Cardiac septum (tissue), 1 donor: ENCODE measurements at regions of chr22 and their contacts with region 1.

Region 1: GRCh38 chr22:39532215-39533071 is at the start of gene RPS19BP1:
- DNase-seq: peak; percentile 99
- total RNA-seq, gene RPS19BP1: 43.7 TPM

Region 2: DNA sequence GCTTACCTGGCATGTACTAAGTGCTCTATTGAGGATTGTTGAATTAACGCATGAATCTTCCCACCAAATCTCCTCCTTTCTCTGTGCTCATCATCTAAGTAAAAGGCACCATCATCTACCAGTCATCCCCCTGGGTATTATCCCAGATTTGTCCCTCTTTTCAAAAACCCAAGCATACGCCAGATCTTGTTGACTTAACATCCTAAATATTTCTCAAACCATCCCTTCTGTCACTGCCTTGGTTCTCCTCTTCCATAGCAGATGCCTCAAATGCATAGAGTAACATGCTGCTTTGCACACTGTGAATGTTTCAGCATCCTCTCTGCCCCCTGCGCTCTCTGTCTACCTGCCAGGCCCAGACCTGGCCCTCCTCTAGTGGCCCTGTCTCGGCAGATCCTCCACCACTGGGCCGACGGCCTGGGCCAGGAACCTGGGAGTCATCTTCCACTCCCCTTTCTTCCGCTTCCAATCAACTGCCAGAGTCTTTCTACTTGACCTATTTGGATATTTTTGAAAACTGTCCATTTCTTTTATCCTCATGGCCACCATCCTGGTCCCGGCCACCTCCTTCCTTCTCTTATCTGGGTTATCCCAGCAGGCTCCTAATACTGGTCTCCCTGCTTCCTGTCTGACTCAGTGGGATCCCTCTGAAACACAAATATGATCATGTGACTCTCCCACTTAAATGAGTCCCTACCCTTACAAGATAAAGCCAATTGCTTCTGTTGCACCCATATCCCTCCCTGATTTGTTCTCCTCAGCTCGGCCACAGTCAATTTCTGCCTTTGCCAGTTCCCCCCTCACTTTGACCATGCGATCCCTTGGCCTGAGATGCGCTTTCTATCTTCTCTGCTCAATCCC is 136.3 kb before region 1 on chr22:
- intact Hi-C with region 1: loop called (anchors 2 kb)
- DNase-seq: no peak

Region 3: GRCh38 chr22:40024201-40025061 is 492.0 kb after region 1 on chr22:
- intact Hi-C with region 1: loop called (anchors 2 kb)
- DNase-seq: peak; percentile 86

Region 4: GRCh38 chr22:40036591-40037225 is 504.3 kb after region 1 on chr22:
- intact Hi-C with region 1: loop called (anchors 2 kb)
- DNase-seq: no peak

Region 5: GRCh38 chr22:40346178-40347118 is 814.0 kb after region 1 on chr22 and contains the start of gene ADSL:
- intact Hi-C with region 1: loop called (anchors 5 kb)
- DNase-seq: peak; percentile 95
- total RNA-seq, gene ADSL: 47.8 TPM